Posterior vena cava (tissue), 2 donors: ENCODE measurements at regions of chr16 and their contacts with region 1.

Region 1: DNA sequence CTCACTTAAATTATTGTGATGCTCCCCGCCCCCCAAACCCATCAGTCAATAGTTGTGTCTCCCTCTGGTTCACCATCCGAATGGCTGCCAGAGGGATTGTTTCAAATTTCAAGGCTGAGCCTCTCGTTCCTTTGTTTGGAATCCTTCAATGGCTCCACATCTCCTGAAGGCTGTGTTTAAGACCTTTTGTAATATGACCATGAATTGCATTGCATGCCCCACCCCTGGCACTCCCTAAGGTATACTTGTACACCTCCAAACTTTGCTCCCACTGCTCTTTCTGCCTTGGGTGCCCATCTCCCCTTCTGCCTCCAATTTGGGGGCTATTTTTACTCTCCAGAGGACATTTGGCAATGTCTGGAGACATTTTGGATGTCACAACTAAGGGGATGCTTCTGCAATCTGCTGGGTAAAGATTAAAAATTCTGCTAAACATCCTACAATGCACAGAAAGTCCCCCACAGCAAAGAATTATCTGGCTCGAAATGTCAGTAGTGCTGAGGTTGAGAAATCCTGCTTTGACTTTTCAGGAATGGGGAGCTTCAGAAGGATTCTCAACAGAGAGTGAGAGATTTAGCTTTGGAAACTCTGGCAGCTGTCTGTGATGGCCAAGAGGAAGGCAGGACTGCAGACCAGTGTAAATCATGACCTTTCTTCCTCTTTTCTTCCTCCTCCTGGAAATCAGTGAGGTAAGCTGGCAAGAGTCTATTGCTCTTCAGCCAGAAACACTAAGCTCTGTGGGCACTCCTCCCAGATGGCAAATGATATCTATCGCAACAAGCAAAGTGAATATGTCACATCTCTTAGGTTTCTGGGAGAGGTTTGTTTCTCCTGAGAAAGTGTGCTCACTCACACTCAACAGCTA is 8.7 kb upstream of the IL4R start:
- DNase-seq: no peak

Region 2: GRCh38 chr16:26913851-26914250 is 391.3 kb before region 1 on chr16:
- intact Hi-C with region 1: loop called in 1 of 2 experiments (anchors 10 kb)
- DNase-seq: no peak

Region 3: GRCh38 chr16:27286451-27286850 is 18.7 kb before region 1 on chr16:
- intact Hi-C with region 1: no loop called
- DNase-seq: no peak

Region 4: GRCh38 chr16:27322858-27323780 is 18.0 kb after region 1 on chr16:
- intact Hi-C with region 1: no loop called
- DNase-seq: peak; percentile 56

Region 5: GRCh38 chr16:27335349-27336053 is 30.4 kb after region 1 on chr16:
- intact Hi-C with region 1: loop called in 1 of 2 experiments (anchors 1 kb)
- DNase-seq: peak; percentile 51